ENCODE measurements at regions of chr3 and their contacts with region 1.

Region 1: DNA sequence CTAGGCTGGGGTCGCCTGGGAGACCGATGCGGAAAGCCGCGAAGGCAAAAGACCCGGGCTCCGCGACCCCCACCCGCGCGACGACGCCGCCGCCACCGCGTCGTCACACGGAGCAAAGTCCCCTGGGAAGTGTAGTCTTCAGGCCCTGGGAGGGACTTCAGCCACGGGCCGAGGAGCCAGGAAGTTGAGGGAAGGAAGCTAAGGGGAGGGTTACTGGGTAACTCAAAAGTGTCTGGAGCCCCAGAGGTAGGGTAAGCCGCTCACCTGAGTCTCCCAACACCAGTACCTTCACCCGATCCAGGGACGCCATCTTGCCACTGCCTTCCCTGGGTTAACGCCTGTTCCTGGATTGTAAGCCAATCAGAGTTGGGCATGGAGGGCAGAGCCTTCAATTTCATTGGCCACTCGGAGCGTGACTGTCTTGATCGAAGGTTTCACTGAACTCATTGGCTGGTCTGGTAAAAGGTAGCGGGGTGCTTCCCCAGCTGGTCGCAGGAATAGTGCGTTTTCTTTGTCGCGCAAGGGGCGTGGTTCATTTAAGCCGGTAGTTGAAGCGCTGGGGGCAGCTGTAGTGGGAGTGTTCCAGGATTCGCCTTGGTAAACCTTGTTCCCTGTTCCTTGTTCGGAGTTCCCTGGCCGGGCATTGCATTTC is at the starts of genes GTF2E1 and RABL3:
- DNase-seq: peak; percentile 86 to 98 (median 97)
- ATAC-seq: peak; percentile 97
- H3K4me3 ChIP-seq: peak within 1 kb of the TSS; percentile 81
- H3K4me3 Mint-ChIP-seq: peak within 1 kb of the TSS; percentile 84 to 97 (median 92)
- H3K27ac ChIP-seq: peak within 1 kb of the TSS; percentile 98
- H3K27ac Mint-ChIP-seq: peak within 1 kb of the TSS; percentile 93 to 99 (median 97)
- H3K4me1 ChIP-seq: peaks cover 16 to 23% of the 10 kb centered on the region in 2 donors
- H3K4me1 Mint-ChIP-seq: peaks cover 26 to 55% (median 47%) of the 10 kb centered on the region in 7 donors
- H3K27me3 ChIP-seq: no peaks in the 10 kb centered on the region
- H3K27me3 Mint-ChIP-seq: no peaks in the 10 kb centered on the region
- total RNA-seq, gene GTF2E1: 8.4 to 27.3 (median 25.3) TPM
- total RNA-seq, gene RABL3: 15.4 to 30.3 (median 23.0) TPM

Region 2: GRCh38 chr3:119498186-119498987 is 1243.9 kb before region 1 on chr3 and contains the start of gene TIMMDC1:
- CTCF ChIA-PET with region 1: no interaction called
- POLR2A ChIA-PET with region 1: no interaction called
- intact Hi-C with region 1: loop called in 1 of 2 experiments (anchors 1 kb)
- DNase-seq: peak; percentile 95 to 98 (median 97)
- ATAC-seq: peak; percentile 99
- H3K4me3 ChIP-seq: peak within 1 kb of the TSS; percentile 97
- H3K4me3 Mint-ChIP-seq: peak within 1 kb of the TSS; percentile 95 to 100 (median 99)
- H3K27ac ChIP-seq: peak within 1 kb of the TSS; percentile 96
- H3K27ac Mint-ChIP-seq: peak within 1 kb of the TSS; percentile 98 to 100 (median 99)
- H3K4me1 ChIP-seq: peaks cover 18% of the 10 kb centered on the region in 2 donors
- H3K4me1 Mint-ChIP-seq: peaks cover 22 to 41% (median 34%) of the 10 kb centered on the region in 7 donors
- H3K27me3 ChIP-seq: no peaks in the 10 kb centered on the region
- H3K27me3 Mint-ChIP-seq: no peaks in the 10 kb centered on the region
- total RNA-seq, gene TIMMDC1: 27.1 to 80.1 (median 73.4) TPM

Region 3: DNA sequence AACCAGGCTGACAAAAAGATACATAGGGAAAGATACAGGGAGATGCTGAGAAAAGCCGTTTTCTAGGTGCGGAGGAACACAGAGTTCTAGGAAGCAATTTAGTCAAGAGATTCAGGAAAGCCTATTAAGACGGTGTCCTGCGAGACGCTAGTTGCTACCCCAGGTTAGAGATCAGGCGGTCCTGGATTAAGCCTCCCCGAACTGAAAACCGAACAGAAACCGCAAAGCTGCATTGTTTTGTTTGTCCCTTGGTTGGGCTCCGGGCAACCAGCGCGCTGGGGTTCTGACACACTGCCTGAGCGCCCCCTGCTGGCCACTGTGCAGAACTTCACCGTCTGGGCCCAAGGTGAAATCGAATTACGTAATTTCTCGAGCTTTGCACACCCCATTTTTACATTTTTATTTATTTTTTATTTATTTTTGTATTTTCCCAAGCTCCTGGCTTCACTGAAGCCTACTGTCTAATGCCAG is 183.5 kb before region 1 on chr3:
- CTCF ChIA-PET with region 1: interaction called, 8 read pairs
- POLR2A ChIA-PET with region 1: no interaction called
- intact Hi-C with region 1: loop called (anchors 1 kb)
- DNase-seq: peak; percentile 80 to 89 (median 88)
- ATAC-seq: peak; percentile 97
- H3K4me3 ChIP-seq: peak overlapping the region; percentile 61
- H3K4me3 Mint-ChIP-seq: peak overlapping the region; percentile 75 to 87 (median 82)
- H3K27ac ChIP-seq: peak overlapping the region; percentile 58
- H3K27ac Mint-ChIP-seq: peak overlapping the region; percentile 54 to 91 (median 83)
- H3K4me1 ChIP-seq: peaks cover 6% of the 10 kb centered on the region in 2 donors
- H3K4me1 Mint-ChIP-seq: peaks cover 6 to 23% (median 16%) of the 10 kb centered on the region in 7 donors
- H3K27me3 ChIP-seq: peaks cover 0 to 4% of the 10 kb centered on the region in 2 donors
- H3K27me3 Mint-ChIP-seq: peaks cover 0 to 13% (median 7%) of the 10 kb centered on the region in 5 donors

Region 4: GRCh38 chr3:120688121-120688520 is 54.2 kb before region 1 on chr3:
- CTCF ChIA-PET with region 1: no interaction called
- POLR2A ChIA-PET with region 1: no interaction called
- intact Hi-C with region 1: no loop called
- DNase-seq: no peak
- ATAC-seq: no peak
- H3K4me3 ChIP-seq: no peak overlapping the region
- H3K4me3 Mint-ChIP-seq: no peak overlapping the region
- H3K27ac ChIP-seq: no peak overlapping the region
- H3K27ac Mint-ChIP-seq: no peak overlapping the region
- H3K4me1 ChIP-seq: no peaks in the 10 kb centered on the region
- H3K4me1 Mint-ChIP-seq: peaks cover 0 to 5% (median 0%) of the 10 kb centered on the region in 7 donors
- H3K27me3 ChIP-seq: no peaks in the 10 kb centered on the region
- H3K27me3 Mint-ChIP-seq: no peaks in the 10 kb centered on the region

Region 5: GRCh38 chr3:120726784-120727183 is 15.5 kb before region 1 on chr3:
- CTCF ChIA-PET with region 1: interaction called, 3 read pairs
- POLR2A ChIA-PET with region 1: interaction called, 59 read pairs
- intact Hi-C with region 1: no loop called
- DNase-seq: no peak
- ATAC-seq: no peak
- H3K4me3 ChIP-seq: no peak overlapping the region
- H3K4me3 Mint-ChIP-seq: no peak overlapping the region
- H3K27ac ChIP-seq: no peak overlapping the region
- H3K27ac Mint-ChIP-seq: peak overlapping the region in 3 of 9 donors; percentile 12 to 43 (median 38)
- H3K4me1 ChIP-seq: no peaks in the 10 kb centered on the region
- H3K4me1 Mint-ChIP-seq: peaks cover 0 to 22% (median 14%) of the 10 kb centered on the region in 7 donors
- H3K27me3 ChIP-seq: no peaks in the 10 kb centered on the region
- H3K27me3 Mint-ChIP-seq: no peaks in the 10 kb centered on the region

Region 6: GRCh38 chr3:121660356-121661171 is 918.2 kb after region 1 on chr3 and contains the start of gene HCLS1:
- CTCF ChIA-PET with region 1: no interaction called
- POLR2A ChIA-PET with region 1: no interaction called
- intact Hi-C with region 1: loop called in 1 of 2 experiments (anchors 1 kb)
- DNase-seq: peak; percentile 60 to 87 (median 79)
- ATAC-seq: peak; percentile 87
- H3K4me3 ChIP-seq: peak within 1 kb of the TSS; percentile 90
- H3K4me3 Mint-ChIP-seq: peak within 1 kb of the TSS; percentile 82 to 99 (median 95)
- H3K27ac ChIP-seq: peak within 1 kb of the TSS; percentile 90
- H3K27ac Mint-ChIP-seq: peak within 1 kb of the TSS; percentile 96 to 100 (median 99)
- H3K4me1 ChIP-seq: peaks cover 34 to 41% of the 10 kb centered on the region in 2 donors
- H3K4me1 Mint-ChIP-seq: peaks cover 41 to 68% (median 57%) of the 10 kb centered on the region in 7 donors
- H3K27me3 ChIP-seq: no peaks in the 10 kb centered on the region
- H3K27me3 Mint-ChIP-seq: no peaks in the 10 kb centered on the region
- total RNA-seq, gene HCLS1: 275 to 357 (median 311) TPM

Region 7: DNA sequence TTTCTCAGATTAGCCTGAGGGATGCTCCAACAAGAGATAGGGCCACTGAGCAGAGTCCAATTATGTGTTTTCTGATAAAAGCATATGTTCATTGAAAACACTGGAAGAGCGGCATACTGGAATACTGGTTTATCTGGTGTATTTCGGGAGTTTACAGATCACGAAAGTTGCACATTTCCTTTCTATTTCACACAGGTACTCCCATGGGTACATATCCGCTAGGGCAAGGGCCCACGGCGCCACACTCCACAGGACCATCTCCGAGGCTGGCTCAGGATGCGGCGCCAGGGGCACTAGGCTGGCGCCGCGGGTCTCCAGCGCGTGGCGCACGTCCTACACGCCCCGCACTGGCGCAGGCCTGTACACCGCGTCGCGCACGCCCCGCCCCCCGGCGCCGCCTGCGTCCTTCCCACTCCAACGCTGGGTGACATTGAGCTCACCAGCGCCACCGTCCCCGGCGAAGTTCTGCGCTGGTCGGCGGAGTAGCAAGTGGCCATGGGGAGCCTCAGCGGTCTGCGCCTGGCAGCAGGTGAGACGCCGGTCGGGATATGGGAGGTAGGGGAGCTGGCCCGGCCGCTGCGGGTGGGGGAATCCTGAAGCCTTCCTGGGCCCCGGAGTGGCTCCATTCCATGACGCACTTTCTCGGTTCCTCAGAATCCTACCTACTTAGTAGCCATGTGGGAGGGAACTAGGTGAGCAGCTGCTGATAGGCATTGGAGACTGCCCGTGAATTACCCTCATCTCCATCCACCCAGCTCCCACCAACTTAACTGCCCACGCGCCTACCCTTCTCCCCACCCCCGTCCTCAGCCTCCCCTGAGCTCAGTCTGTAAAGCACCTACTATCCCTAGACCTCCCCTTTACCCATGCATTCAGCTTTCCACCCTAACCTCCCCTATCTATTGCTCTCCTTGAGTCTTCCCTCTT is 1641.7 kb after region 1 on chr3 and contains the start of gene FAM162A:
- CTCF ChIA-PET with region 1: no interaction called
- POLR2A ChIA-PET with region 1: no interaction called
- intact Hi-C with region 1: loop called in 1 of 2 experiments (anchors 1 kb)
- DNase-seq: peak; percentile 90 to 94 (median 92)
- ATAC-seq: peak; percentile 98
- H3K4me3 ChIP-seq: peak within 1 kb of the TSS; percentile 84
- H3K4me3 Mint-ChIP-seq: peak within 1 kb of the TSS; percentile 87 to 99 (median 95)
- H3K27ac ChIP-seq: peak within 1 kb of the TSS; percentile 85
- H3K27ac Mint-ChIP-seq: peak within 1 kb of the TSS; percentile 88 to 98 (median 95)
- H3K4me1 ChIP-seq: peaks cover 12 to 15% of the 10 kb centered on the region in 2 donors
- H3K4me1 Mint-ChIP-seq: peaks cover 18 to 69% (median 55%) of the 10 kb centered on the region in 7 donors
- H3K27me3 ChIP-seq: no peaks in the 10 kb centered on the region
- H3K27me3 Mint-ChIP-seq: no peaks in the 10 kb centered on the region
- total RNA-seq, gene FAM162A: 17.6 to 73.2 (median 35.5) TPM

Measured in naive thymus-derived CD4-positive, alpha-beta T cell (primary cell).